Thyroid gland (tissue), 4 donors: ENCODE measurements at regions of chr3 and their contacts with region 1.

Region 1: DNA sequence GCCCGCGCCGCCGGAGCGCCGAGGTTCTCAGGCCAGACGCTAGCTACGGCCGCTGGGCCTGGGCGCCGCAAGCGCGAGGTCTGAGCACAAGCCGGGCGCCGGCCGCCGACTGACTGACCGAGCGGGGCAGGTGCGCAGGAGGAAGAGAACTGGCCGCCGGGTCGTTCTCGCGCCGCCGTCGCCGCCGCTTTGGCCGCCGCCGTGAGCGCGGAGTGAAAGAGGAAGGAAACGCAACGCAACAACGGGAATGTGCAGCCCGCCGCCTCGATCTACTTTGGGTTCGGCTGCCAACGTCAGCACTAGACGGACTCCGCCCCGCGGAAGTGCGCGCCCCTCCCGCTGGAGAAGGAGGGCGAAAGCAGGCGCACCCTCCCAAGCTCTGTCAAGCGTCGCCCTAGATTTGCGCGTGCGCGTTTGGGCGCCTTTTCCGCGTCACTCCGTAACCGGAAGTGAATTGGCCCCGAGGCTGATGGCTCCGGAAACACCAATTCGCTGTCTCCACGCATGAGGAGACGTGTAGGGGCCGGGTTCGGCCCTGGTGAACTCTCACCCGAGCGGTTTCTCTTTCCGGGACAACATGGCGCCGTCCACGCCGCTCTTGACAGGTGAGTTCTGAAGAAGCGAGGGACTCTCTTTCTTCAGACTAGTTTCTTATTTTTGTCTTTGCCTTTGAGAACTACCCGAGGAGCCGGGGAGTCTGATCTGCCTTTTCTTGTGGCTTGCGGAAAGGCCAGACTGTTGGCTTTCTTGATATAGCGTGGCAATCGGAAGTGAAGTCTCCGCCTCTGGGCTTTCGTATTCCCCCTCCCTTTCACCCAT is at the starts of genes EIF2A and SERP1:
- DNase-seq: peak; percentile 98 to 99
- H3K4me3 ChIP-seq: peak within 1 kb of the TSS; percentile 63 to 98 (median 90)
- H3K27ac ChIP-seq: peak within 1 kb of the TSS; percentile 97 to 98 (median 97)
- H3K4me1 ChIP-seq: peaks cover 18 to 22% of the 10 kb centered on the region in 2 donors
- H3K27me3 ChIP-seq: no peaks in the 10 kb centered on the region
- CTCF ChIP-seq: peak in 1 of 6 experiments; percentile 18
- POLR2A ChIP-seq: peak; percentile 96 to 100
- total RNA-seq, gene EIF2A: 179 to 198 (median 189) TPM
- total RNA-seq, gene SERP1: 146 to 355 (median 270) TPM

Region 2: GRCh38 chr3:150603153-150603979 is 56.9 kb after region 1 on chr3 and contains the start of gene SELENOT:
- intact Hi-C with region 1: loop called (anchors 5 kb)
- DNase-seq: peak; percentile 94 to 95
- H3K4me3 ChIP-seq: peak within 1 kb of the TSS; percentile 42 to 79 (median 54)
- H3K27ac ChIP-seq: peak within 1 kb of the TSS; percentile 94 to 97 (median 97)
- H3K4me1 ChIP-seq: peaks cover 20 to 40% of the 10 kb centered on the region in 2 donors
- H3K27me3 ChIP-seq: no peaks in the 10 kb centered on the region
- CTCF ChIP-seq: peak in 4 of 6 experiments; percentile 27 to 40 (median 36)
- POLR2A ChIP-seq: peak; percentile 81 to 98
- total RNA-seq, gene SELENOT: 98.8 to 168 (median 137) TPM

Region 3: DNA sequence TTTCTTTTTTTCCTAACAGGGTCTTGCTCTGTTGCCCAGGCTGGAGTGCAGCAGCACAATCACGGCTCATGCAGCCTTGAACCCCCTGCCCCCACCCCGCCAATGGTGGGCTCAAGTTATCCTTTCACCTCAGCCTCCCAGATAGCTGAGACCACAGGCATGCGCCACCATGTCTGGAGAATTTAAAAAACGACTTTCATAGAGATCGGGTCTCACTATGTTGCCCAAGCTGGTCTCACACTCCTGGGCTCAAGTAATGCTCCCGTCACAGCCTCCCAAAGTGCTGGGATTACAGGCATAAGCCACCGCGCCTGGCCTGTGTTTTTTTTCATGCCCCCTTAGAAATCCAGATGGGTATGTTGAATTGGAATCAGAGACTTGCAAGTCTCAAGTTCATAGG is 117.0 kb after region 1 on chr3:
- intact Hi-C with region 1: no loop called
- DNase-seq: no peak
- H3K4me3 ChIP-seq: no peak overlapping the region
- H3K27ac ChIP-seq: no peak overlapping the region
- H3K4me1 ChIP-seq: no peaks in the 10 kb centered on the region
- H3K27me3 ChIP-seq: no peaks in the 10 kb centered on the region
- CTCF ChIP-seq: no peak
- POLR2A ChIP-seq: no peak

Region 4: DNA sequence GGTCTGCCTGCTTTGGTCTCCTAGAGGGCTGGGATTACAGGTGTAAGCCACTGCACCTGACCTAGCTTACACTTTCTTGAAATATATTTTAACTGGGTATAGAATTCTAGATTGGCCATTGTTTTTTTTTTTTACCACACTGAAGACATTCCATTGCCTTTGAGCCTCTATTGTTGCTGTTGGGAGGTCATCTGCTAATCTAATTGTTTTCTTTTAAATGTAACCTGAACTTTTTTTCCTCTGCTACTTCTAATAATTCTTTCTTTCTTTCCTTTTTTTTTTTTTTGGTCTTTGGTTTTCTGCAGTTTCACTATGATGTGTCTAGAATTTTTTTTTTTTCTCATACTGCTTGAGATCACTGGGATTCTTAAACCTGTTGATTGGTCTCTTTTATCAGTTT is 129.2 kb after region 1 on chr3:
- intact Hi-C with region 1: no loop called
- DNase-seq: no peak
- H3K4me3 ChIP-seq: no peak overlapping the region
- H3K27ac ChIP-seq: no peak overlapping the region
- H3K4me1 ChIP-seq: no peaks in the 10 kb centered on the region
- H3K27me3 ChIP-seq: no peaks in the 10 kb centered on the region
- CTCF ChIP-seq: no peak
- POLR2A ChIP-seq: no peak

Region 5: GRCh38 chr3:150699068-150699639 is 152.7 kb after region 1 on chr3:
- intact Hi-C with region 1: no loop called
- DNase-seq: no peak
- H3K4me3 ChIP-seq: no peak overlapping the region
- H3K27ac ChIP-seq: no peak overlapping the region
- H3K4me1 ChIP-seq: peaks cover 0 to 3% of the 10 kb centered on the region in 2 donors
- H3K27me3 ChIP-seq: no peaks in the 10 kb centered on the region
- CTCF ChIP-seq: no peak
- POLR2A ChIP-seq: no peak

Region 6: GRCh38 chr3:150710097-150710496 is 163.7 kb after region 1 on chr3:
- intact Hi-C with region 1: no loop called
- DNase-seq: no peak
- H3K4me3 ChIP-seq: no peak overlapping the region
- H3K27ac ChIP-seq: no peak overlapping the region
- H3K4me1 ChIP-seq: no peaks in the 10 kb centered on the region
- H3K27me3 ChIP-seq: no peaks in the 10 kb centered on the region
- CTCF ChIP-seq: no peak
- POLR2A ChIP-seq: no peak

Region 7: DNA sequence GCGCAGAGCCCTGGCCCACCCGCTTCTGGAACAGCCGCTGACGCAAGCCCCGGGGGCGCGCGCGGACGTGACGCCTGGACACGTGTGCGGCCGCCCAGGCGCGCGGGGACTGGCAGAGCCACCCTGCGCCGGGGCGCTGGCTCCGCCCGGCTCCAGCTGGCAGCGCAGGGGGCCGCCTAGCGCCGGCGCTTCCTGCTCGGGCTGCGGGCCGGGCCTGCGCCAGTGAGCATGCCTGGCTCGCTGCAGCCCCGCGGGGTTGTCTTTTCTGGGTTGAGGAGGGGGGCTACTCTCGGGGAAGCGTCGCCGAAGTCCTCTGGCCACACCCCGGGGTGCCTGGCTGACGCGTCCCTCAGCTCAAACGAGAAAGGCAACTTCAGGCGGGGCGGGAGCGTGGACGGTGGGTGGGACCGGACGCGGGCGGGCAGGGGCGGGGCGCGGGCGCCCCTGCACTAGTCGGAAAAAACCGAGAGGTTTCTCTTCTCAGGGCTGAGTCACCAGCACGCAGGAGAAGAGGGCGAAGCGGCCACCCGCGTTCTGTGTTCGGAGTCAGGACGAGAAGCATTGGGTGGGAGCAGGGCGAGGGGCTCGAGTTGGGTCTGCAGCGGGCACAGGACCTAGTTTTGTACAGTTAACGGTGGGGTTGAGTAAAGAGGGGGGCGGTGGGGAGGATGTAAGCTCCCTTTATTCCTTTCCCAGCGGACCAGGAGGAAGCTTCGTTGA is 216.8 kb after region 1 on chr3 and contains the start of gene SIAH2:
- intact Hi-C with region 1: loop called (anchors 10 kb)
- DNase-seq: peak; percentile 92
- H3K4me3 ChIP-seq: peak within 1 kb of the TSS; percentile 38 to 73 (median 61)
- H3K27ac ChIP-seq: peak within 1 kb of the TSS; percentile 91 to 97 (median 94)
- H3K4me1 ChIP-seq: peaks cover 21 to 26% of the 10 kb centered on the region in 2 donors
- H3K27me3 ChIP-seq: no peaks in the 10 kb centered on the region
- CTCF ChIP-seq: no peak
- POLR2A ChIP-seq: peak; percentile 76 to 98
- total RNA-seq, gene SIAH2: 17.8 to 29.0 (median 20.4) TPM